ENCODE measurements at regions of chr9 and their contacts with region 1.

Region 1: DNA sequence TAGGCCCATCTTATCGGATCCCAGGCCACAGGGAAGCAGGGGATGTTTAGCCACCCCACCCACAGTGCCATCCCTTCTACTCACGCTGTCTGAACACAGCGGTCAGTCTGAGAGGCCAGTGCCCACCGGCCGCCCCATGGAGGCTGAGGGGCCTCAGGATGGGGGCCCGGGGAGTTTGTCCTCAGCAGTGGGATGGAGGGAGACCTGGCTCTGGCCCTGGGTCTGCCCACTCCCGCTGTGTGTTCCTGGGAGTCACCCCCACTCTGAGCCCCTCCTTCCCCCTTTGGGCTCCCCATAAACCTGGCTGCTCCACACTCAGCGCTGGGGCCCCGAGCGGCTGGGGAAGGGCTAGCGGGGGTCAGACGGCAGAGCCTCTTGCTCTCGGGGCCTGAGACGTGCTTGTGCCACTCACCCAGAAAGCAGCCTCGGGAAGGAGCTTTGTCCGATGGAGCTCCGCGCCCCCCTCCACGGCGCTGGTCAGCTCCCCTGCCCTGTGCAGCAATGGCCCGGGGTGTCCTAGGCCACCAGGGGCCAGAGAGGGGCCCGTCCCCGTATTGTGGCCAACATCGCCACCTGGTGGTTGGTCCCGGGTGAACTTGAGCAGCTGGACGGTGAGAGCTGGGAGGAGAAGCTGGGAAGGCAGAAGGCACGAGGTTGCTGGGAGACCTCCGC is 10.9 kb upstream of the LAMC3 start:
- DNase-seq: peak; percentile 74
- ATAC-seq: peak; percentile 89 to 90

Region 2: GRCh38 chr9:130701056-130702022 is 296.7 kb before region 1 on chr9:
- intact Hi-C with region 1: loop called in 1 of 2 experiments (anchors 2 kb)
- DNase-seq: peak; percentile 88
- ATAC-seq: peak; percentile 92 to 96

Region 3: DNA sequence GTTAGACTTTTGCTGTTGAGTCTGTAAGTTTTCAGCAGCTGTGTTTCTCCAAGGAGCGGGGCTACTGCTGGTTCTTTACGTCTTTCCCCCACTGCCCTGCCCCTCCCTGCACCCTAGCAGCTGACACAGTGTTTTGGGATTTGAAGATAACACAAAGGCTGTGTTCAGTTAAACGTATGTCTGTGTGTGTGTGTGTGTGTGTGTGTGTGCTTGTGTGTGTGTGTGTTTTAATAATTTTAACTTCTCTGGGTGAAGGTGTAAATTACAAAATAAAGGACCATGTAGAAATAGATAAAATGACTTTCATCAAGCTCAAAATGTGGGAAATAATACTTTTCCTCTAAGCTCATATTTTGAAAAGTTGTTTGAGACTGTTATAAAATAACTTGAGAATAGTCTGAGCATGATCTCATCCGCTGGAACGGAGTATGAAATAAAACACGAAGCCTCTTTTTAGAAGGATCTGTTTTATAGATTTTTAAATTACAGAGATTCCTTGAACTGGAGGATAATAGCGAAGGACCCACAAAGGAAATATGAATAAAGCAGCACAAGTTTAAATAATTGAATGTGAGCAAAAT is 152.1 kb before region 1 on chr9:
- intact Hi-C with region 1: no loop called
- DNase-seq: no peak
- ATAC-seq: peak; percentile 12 to 34

Region 4: GRCh38 chr9:130884980-130885696 is 112.9 kb before region 1 on chr9:
- intact Hi-C with region 1: no loop called
- DNase-seq: no peak
- ATAC-seq: peak in 1 of 2 donors; percentile 4

Region 5: GRCh38 chr9:130940693-130941576 is 57.1 kb before region 1 on chr9:
- intact Hi-C with region 1: loop called in 1 of 2 experiments (anchors 10 kb)
- DNase-seq: peak; percentile 63
- ATAC-seq: peak; percentile 49 to 78

Measured in left cardiac atrium (tissue), 4 donors.